ENCODE measurements at regions of chr15 and their contacts with region 1.

Region 1: DNA sequence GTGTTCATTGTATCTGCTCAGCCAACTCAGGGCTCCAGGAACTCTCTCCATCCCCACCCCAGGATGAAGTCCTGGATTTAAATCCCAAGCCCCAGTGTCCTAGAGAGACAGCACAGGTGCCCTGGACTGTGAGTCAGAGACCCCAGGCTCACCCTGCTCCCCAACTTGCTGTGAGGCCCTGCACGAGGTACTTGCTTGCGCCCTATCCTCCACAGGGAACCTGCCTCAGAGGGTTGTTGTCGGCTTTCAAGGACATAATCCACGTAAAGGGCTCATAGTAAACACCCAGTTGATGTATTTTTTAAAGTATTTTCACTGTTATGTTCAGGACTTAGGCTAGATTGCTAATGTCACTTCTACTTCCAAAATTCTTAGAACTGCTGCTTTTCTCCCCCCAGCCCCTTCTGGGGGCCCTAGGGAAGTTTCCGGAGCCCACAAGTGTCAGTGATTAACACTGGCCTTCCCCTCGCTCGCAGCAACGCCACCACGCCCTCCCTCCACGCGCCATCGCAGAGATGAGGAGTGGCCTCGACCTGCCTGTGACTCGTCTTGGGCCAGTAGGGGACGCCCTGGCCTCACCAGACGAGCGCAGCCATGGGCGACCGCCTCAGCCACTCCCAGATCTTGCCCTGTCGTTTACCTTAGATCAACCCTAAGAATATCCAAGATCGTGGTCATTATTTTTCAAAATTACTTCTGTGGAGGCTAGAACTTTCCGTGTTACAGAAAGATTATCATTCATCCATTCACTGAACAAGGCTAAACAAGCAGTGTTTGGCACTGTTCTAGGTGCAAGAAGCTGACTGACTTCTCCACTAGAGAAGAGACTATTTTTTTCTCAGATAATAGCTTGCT is 6.0 kb upstream of the SRP14 start:
- DNase-seq: peak; percentile 90
- ATAC-seq: peak; percentile 92
- H3K4me3 Mint-ChIP-seq: peak overlapping the region; percentile 22
- H3K27ac Mint-ChIP-seq: peak overlapping the region; percentile 62
- H3K4me1 Mint-ChIP-seq: peaks cover 69% of the 10 kb centered on the region
- H3K27me3 Mint-ChIP-seq: no peaks in the 10 kb centered on the region

Region 2: GRCh38 chr15:40160689-40161688 is 116.0 kb after region 1 on chr15 and contains the start of gene BUB1B:
- CTCF ChIA-PET with region 1: interaction called, 42 read pairs
- DNase-seq: peak; percentile 97
- ATAC-seq: peak; percentile 93
- H3K4me3 Mint-ChIP-seq: no peak within 1 kb of the TSS
- H3K27ac Mint-ChIP-seq: no peak within 1 kb of the TSS
- H3K4me1 Mint-ChIP-seq: peaks cover 15% of the 10 kb centered on the region
- H3K27me3 Mint-ChIP-seq: no peaks in the 10 kb centered on the region
- total RNA-seq, gene BUB1B: 89.5 to 107 TPM

Measured in activated CD8-positive, alpha-beta memory T cell treated with anti-CD3 and anti-CD28 coated beads, Interleukin-2, amount 10 ng/mL, durations not matched to agents 7 days and 5 days (primary cell).